Psoas muscle (tissue), 8 donors: ENCODE measurements at regions of chr4 and their contacts with region 1.

Region 1: GRCh38 chr4:58658701-58659100 is 1548.5 kb upstream of the IGFBP7 start:
- DNase-seq: no peak
- ATAC-seq: no peak
- H3K4me3 ChIP-seq: no peak overlapping the region
- H3K27ac ChIP-seq: no peak overlapping the region
- H3K4me1 ChIP-seq: no peaks in the 10 kb centered on the region
- H3K27me3 ChIP-seq: no peaks in the 10 kb centered on the region
- CTCF ChIP-seq: no peak

Region 2: GRCh38 chr4:58560736-58561135 is 98.0 kb before region 1 on chr4:
- intact Hi-C with region 1: loop called in 1 of 2 experiments (anchors 5 kb)
- DNase-seq: no peak
- ATAC-seq: no peak
- H3K4me3 ChIP-seq: no peak overlapping the region
- H3K27ac ChIP-seq: no peak overlapping the region
- H3K4me1 ChIP-seq: no peaks in the 10 kb centered on the region
- H3K27me3 ChIP-seq: no peaks in the 10 kb centered on the region
- CTCF ChIP-seq: no peak